ENCODE measurements at regions of chr7 and their contacts with region 1.

Region 1: DNA sequence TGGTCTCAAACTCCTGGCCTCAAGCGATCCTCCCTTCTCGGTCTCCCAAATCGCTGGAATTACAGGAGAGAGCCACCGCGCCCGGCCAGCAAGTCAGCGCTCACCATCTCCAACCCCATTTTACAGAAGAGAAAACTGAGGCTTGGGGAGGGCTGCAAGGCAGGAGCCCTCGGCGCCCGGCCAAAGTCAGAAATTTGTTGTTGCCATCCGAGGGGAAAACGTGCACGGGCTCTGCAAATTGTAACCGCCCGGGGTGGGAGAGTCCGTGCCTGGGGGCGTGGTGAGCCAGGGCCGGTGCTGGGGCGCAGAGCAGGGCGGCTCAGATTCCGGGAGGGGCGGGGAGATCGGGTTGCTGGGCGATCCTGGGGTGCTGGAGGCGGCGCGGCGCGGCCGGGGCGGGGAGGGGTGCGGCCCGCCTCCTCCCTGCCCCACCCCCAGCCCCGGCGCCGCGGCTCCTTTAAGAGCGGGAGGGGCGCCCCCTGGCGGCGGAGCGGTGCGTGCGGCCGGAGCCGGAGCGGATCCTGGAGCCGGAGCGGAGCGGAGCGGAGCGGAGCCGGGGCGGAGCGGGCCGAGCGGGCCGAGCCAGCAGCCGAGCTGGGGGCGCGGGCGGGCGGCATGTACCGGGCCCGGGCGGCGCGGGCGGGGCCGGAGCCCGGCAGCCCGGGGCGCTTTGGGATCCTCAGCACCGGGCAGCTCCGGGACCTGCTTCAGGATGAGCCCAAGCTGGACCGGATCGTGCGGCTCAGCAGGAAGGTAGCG is at the start of gene VPS37D:
- DNase-seq: peak; percentile 85
- H3K4me3 ChIP-seq: peak within 1 kb of the TSS; percentile 48 to 62 (median 56)
- H3K27ac ChIP-seq: no peak within 1 kb of the TSS
- H3K4me1 ChIP-seq: peaks cover 10% of the 10 kb centered on the region
- H3K27me3 ChIP-seq: peaks cover 2% of the 10 kb centered on the region
- CTCF ChIP-seq: peak; percentile 39 to 69
- total RNA-seq, gene VPS37D: 1.1 to 3.7 TPM

Region 2: GRCh38 chr7:73606801-73607691 is 60.5 kb before region 1 on chr7:
- CTCF ChIA-PET with region 1: interaction called, 6 read pairs
- dilution Hi-C with region 1: loop called (anchors 5 kb)
- in situ Hi-C with region 1: no loop called
- intact Hi-C with region 1: loop called (anchors 1 kb)
- DNase-seq: no peak
- H3K4me3 ChIP-seq: no peak overlapping the region
- H3K27ac ChIP-seq: no peak overlapping the region
- H3K4me1 ChIP-seq: peaks cover 9% of the 10 kb centered on the region
- H3K27me3 ChIP-seq: no peaks in the 10 kb centered on the region
- CTCF ChIP-seq: peak; percentile 85 to 98

Region 3: DNA sequence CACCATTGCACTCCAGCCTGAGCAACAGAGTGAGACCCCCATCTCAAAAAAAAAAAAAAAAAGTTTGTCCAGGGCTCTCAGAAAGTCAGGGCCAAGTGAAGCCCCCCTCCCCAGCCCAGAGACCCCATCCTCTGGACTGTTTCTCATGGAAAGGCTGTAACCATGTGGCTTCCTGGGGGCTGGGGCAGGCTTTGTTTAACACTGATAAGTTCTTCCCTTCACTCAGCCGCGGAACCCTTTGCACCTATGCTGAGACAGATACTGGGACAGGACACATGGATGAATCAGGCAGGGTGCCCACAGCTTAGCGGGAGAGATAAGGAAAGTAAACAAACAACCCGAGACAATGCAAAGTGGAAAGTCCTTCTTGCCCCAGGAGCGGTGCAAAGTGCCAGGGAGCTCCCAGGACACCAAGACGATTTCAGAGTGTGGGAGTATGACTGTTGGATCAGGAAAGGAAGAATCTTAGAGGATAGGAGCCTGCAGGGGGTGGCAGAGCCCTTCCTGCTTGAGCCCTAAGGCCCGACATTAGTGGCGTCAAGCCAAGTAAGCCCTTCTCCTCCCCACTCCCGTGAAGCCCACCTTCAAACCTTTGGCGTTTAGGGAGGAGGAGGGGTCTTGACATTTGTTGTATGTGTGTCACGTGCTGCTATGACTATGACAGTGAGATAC is 54.8 kb before region 1 on chr7:
- CTCF ChIA-PET with region 1: no interaction called
- dilution Hi-C with region 1: loop called (anchors 5 kb)
- in situ Hi-C with region 1: no loop called
- intact Hi-C with region 1: loop called (anchors 1 kb)
- DNase-seq: peak; percentile 58
- H3K4me3 ChIP-seq: no peak overlapping the region
- H3K27ac ChIP-seq: no peak overlapping the region
- H3K4me1 ChIP-seq: peaks cover 5% of the 10 kb centered on the region
- H3K27me3 ChIP-seq: no peaks in the 10 kb centered on the region
- CTCF ChIP-seq: peak in 1 of 2 donors; percentile 41

Region 4: DNA sequence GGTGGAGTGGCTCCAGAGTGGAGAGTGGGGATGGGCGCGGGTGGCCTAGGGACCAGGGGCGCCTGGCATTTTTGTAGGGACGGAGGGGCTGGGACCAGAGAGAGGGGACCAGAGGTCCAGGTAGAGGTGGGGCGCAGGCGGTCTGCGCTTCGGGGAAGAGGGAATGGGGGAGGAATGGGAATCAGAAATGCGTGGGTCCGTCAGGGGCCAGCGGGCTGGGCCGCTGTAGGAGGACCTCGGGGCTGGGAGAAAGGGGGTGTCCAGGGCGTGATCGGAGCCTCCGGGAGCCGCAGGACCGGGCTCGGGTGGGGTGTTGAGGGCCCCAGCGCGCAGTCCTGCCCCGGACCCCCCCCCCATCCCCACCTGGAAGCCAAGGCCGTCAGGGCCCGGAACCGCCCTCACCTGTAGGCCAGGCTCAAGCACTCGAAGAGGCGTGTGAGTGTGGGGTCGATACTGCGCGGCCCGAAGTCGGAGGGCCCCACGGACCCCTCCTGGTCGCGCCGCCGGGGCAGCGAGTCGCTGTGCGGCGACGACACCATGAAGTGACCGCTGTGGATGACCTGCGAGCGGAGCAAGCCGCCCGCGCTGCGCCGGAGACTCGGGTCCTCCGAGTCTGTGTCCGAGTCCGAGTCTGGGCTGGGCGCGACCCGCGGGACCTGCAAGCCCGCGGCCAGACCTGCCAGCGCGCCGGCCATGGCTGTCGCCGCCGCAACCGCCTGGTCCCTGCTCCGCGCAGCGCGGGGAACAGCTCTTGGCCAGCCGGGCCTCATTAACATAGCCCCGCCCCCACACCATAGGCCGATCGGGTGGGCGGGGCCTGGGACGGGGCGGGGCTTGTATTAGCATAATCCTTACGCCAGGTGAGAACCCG is 43.5 kb before region 1 on chr7 and contains the start of gene MLXIPL:
- CTCF ChIA-PET with region 1: no interaction called
- dilution Hi-C with region 1: no loop called
- in situ Hi-C with region 1: no loop called
- intact Hi-C with region 1: loop called (anchors 1 kb)
- DNase-seq: peak; percentile 62
- H3K4me3 ChIP-seq: peak within 1 kb of the TSS; percentile 39 to 47 (median 46)
- H3K27ac ChIP-seq: no peak within 1 kb of the TSS
- H3K4me1 ChIP-seq: peaks cover 14% of the 10 kb centered on the region
- H3K27me3 ChIP-seq: peaks cover 14% of the 10 kb centered on the region
- CTCF ChIP-seq: no peak
- total RNA-seq, gene MLXIPL: 1.5 TPM in 1 of 2 donors, not detected in the other

Region 5: DNA sequence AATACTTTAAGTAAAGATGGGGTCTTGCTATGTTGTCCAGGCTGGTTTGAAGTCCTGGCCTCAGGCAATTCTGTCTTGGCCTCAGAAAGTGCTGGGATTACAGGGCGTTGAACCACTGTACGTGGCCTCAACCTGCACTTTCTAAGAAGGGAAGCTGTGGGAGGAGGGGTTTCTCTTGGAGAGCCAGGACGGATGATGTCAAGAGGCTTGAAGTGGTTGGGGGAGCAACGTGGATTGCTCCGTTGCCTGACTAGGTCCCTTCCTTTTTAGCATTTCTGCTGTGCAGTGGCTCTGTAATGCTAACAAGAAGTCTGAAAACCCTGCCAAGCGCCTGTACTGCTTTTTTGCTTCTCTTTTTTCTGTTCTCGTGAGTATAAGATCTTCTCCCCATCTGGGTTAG is 23.1 kb after region 1 on chr7:
- CTCF ChIA-PET with region 1: no interaction called
- dilution Hi-C with region 1: no loop called
- in situ Hi-C with region 1: no loop called
- intact Hi-C with region 1: no loop called
- DNase-seq: no peak
- H3K4me3 ChIP-seq: no peak overlapping the region
- H3K27ac ChIP-seq: no peak overlapping the region
- H3K4me1 ChIP-seq: no peaks in the 10 kb centered on the region
- H3K27me3 ChIP-seq: no peaks in the 10 kb centered on the region
- CTCF ChIP-seq: no peak

Region 6: GRCh38 chr7:73712773-73713172 is 45.2 kb after region 1 on chr7:
- CTCF ChIA-PET with region 1: interaction called, 3 read pairs
- dilution Hi-C with region 1: loop called (anchors 5 kb)
- in situ Hi-C with region 1: no loop called
- intact Hi-C with region 1: no loop called
- DNase-seq: no peak
- H3K4me3 ChIP-seq: no peak overlapping the region
- H3K27ac ChIP-seq: no peak overlapping the region
- H3K4me1 ChIP-seq: peaks cover 26% of the 10 kb centered on the region
- H3K27me3 ChIP-seq: no peaks in the 10 kb centered on the region
- CTCF ChIP-seq: no peak

Region 7: GRCh38 chr7:73726083-73726466 is 58.6 kb after region 1 on chr7:
- CTCF ChIA-PET with region 1: no interaction called
- dilution Hi-C with region 1: no loop called
- in situ Hi-C with region 1: no loop called
- intact Hi-C with region 1: loop called (anchors 5 kb)
- DNase-seq: no peak
- H3K4me3 ChIP-seq: no peak overlapping the region
- H3K27ac ChIP-seq: no peak overlapping the region
- H3K4me1 ChIP-seq: peaks cover 7% of the 10 kb centered on the region
- H3K27me3 ChIP-seq: no peaks in the 10 kb centered on the region
- CTCF ChIP-seq: no peak

Region 8: GRCh38 chr7:73749931-73750776 is 82.6 kb after region 1 on chr7:
- CTCF ChIA-PET with region 1: no interaction called
- dilution Hi-C with region 1: loop called (anchors 5 kb)
- in situ Hi-C with region 1: no loop called
- intact Hi-C with region 1: no loop called
- DNase-seq: no peak
- H3K4me3 ChIP-seq: no peak overlapping the region
- H3K27ac ChIP-seq: no peak overlapping the region
- H3K4me1 ChIP-seq: no peaks in the 10 kb centered on the region
- H3K27me3 ChIP-seq: no peaks in the 10 kb centered on the region
- CTCF ChIP-seq: no peak

Region 9: GRCh38 chr7:73941836-73942551 is 274.5 kb after region 1 on chr7:
- CTCF ChIA-PET with region 1: no interaction called
- dilution Hi-C with region 1: no loop called
- in situ Hi-C with region 1: no loop called
- intact Hi-C with region 1: no loop called
- DNase-seq: peak; percentile 52
- H3K4me3 ChIP-seq: no peak overlapping the region
- H3K27ac ChIP-seq: no peak overlapping the region
- H3K4me1 ChIP-seq: peaks cover 7% of the 10 kb centered on the region
- H3K27me3 ChIP-seq: no peaks in the 10 kb centered on the region
- CTCF ChIP-seq: no peak

Measured in mammary epithelial cell (primary cell).